Dendritic cell treated with granulocyte-macrophage colony-stimulating factor and Interleukin-4, amounts not matched to agents 40 ng/mL and 50 ng/mL, for 4 days (primary cell): ENCODE measurements at regions of chr12 and their contacts with region 1.

Region 1: GRCh38 chr12:15772405-15773018 is 16.7 kb downstream of the EPS8 start:
- H3K4me3 Mint-ChIP-seq: no peak overlapping the region
- H3K27ac Mint-ChIP-seq: no peak overlapping the region
- H3K4me1 Mint-ChIP-seq: peaks cover 11% of the 10 kb centered on the region
- H3K27me3 Mint-ChIP-seq: peaks cover 2% of the 10 kb centered on the region

Region 2: DNA sequence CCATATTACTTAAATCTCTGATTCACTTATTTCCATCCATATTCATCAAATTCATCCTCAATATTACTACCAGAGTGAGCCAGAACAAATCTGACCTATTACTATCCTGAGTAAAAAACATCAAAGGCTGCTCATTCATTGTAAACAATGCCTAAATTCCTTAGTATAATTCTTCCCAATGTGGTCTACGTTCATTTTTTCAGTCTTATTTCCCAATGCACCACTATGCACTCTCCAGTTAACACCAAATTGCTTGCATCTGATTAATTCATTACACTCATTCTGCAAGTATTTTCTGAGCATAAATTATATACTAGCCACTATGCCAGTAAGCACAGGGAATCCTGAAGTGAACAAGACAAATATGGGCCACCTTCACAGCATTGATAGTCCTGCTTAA is 93.4 kb before region 1 on chr12:
- intact Hi-C with region 1: no loop called
- H3K4me3 Mint-ChIP-seq: no peak overlapping the region
- H3K27ac Mint-ChIP-seq: no peak overlapping the region
- H3K4me1 Mint-ChIP-seq: no peaks in the 10 kb centered on the region
- H3K27me3 Mint-ChIP-seq: no peaks in the 10 kb centered on the region

Region 3: GRCh38 chr12:15842108-15842507 is 69.6 kb after region 1 on chr12:
- intact Hi-C with region 1: loop called (anchors 10 kb)
- H3K4me3 Mint-ChIP-seq: no peak overlapping the region
- H3K27ac Mint-ChIP-seq: no peak overlapping the region
- H3K4me1 Mint-ChIP-seq: no peaks in the 10 kb centered on the region
- H3K27me3 Mint-ChIP-seq: no peaks in the 10 kb centered on the region